Transverse colon (tissue), 4 donors: ENCODE measurements at regions of chr15 and their contacts with region 1.

Region 1: GRCh38 chr15:27671819-27672437 is 427.2 kb downstream of the OCA2 start:
- DNase-seq: no peak
- H3K4me3 ChIP-seq: no peak overlapping the region
- H3K27ac ChIP-seq: no peak overlapping the region
- H3K4me1 ChIP-seq: peaks cover 0 to 6% (median 0%) of the 10 kb centered on the region in 4 donors
- H3K27me3 ChIP-seq: no peaks in the 10 kb centered on the region
- CTCF ChIP-seq: no peak
- EP300 ChIP-seq: no peak
- POLR2A ChIP-seq: no peak

Region 2: GRCh38 chr15:26620528-26621458 is 1051.1 kb before region 1 on chr15:
- in situ Hi-C with region 1: no loop called
- intact Hi-C with region 1: no loop called
- DNase-seq: no peak
- H3K4me3 ChIP-seq: no peak overlapping the region
- H3K27ac ChIP-seq: no peak overlapping the region
- H3K4me1 ChIP-seq: no peaks in the 10 kb centered on the region
- H3K27me3 ChIP-seq: no peaks in the 10 kb centered on the region
- CTCF ChIP-seq: no peak
- EP300 ChIP-seq: no peak
- POLR2A ChIP-seq: no peak

Region 3: DNA sequence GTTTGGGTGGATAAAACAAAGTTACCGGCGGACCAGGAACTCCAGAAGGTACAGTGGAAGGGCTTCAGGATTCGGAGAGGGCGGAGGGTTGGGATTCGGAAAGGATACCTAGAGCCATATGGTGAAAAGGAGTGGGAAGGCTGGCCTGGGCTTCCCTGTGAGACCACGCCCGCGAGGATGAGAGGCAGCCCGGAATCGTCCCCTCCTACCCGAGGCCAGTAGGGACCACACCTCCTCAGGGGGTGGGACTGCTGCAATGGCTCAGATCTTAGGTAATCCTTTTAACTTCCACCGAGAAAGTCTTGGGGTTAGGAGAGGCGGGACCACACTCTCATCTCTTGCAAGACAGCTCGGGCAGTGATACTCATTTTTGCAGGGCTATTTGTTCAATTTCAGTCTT is 84.1 kb before region 1 on chr15:
- in situ Hi-C with region 1: no loop called
- intact Hi-C with region 1: no loop called
- DNase-seq: no peak
- H3K4me3 ChIP-seq: no peak overlapping the region
- H3K27ac ChIP-seq: no peak overlapping the region
- H3K4me1 ChIP-seq: no peaks in the 10 kb centered on the region
- H3K27me3 ChIP-seq: no peaks in the 10 kb centered on the region
- CTCF ChIP-seq: no peak
- EP300 ChIP-seq: no peak
- POLR2A ChIP-seq: no peak

Region 4: DNA sequence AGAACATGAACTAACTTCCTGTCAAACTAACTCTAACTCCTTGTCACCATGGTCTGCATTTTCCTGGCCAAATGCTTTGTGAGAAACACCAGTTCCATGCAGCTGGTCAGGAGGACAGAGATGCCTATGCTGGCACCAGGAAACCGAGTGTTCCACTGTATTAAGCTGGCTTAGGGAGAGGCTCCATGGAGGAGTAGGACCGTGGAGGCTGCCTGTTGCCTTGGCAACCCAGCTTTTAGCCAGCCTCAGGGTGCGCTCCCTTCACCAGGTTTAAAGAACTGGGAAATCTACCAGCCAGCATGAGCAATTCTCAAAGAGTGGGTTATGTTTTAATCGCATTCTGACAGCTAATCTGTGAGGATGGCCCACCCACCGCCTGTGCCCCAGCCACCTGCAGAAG is 33.1 kb after region 1 on chr15:
- in situ Hi-C with region 1: no loop called
- intact Hi-C with region 1: loop called (anchors 1 kb)
- DNase-seq: no peak
- H3K4me3 ChIP-seq: no peak overlapping the region
- H3K27ac ChIP-seq: no peak overlapping the region
- H3K4me1 ChIP-seq: no peaks in the 10 kb centered on the region
- H3K27me3 ChIP-seq: no peaks in the 10 kb centered on the region
- CTCF ChIP-seq: no peak
- EP300 ChIP-seq: no peak
- POLR2A ChIP-seq: no peak

Region 5: GRCh38 chr15:27797765-27798164 is 125.8 kb after region 1 on chr15:
- in situ Hi-C with region 1: no loop called
- intact Hi-C with region 1: no loop called
- DNase-seq: no peak
- H3K4me3 ChIP-seq: no peak overlapping the region
- H3K27ac ChIP-seq: no peak overlapping the region
- H3K4me1 ChIP-seq: no peaks in the 10 kb centered on the region
- H3K27me3 ChIP-seq: no peaks in the 10 kb centered on the region
- CTCF ChIP-seq: no peak
- EP300 ChIP-seq: no peak
- POLR2A ChIP-seq: no peak